Prostate gland (tissue), 2 donors: ENCODE measurements at regions of chr5 and their contacts with region 1.

Region 1: DNA sequence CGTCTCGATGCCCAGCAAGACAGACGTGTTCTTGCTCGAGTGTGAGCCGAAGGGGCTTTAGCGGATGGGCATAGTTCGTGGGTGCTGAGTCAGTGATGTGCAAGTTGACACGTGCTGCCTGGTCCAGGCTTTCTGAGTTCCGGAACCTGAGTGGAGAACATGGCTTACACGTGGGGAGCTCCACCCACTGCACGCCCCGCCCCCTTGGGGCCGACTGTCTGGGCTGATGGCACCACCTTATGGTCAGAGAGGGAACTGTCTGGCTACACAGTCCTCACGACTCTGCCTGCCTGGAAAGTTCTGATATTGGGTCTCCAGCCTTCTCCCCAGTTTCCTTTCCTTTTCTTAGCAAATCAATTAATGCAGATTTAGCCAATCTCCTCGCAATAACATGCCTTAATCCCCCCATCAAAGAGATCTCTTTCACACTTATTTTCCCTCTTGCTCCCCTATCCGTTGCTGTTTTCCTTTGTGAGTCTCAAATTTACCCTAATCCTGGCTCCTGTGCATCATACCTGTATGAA is 3.8 kb upstream of the STC2 start:
- DNase-seq: peak; percentile 70
- H3K4me3 ChIP-seq: no peak overlapping the region
- H3K27ac ChIP-seq: no peak overlapping the region
- H3K4me1 ChIP-seq: peaks cover 15% of the 10 kb centered on the region
- H3K27me3 ChIP-seq: peaks cover 8% of the 10 kb centered on the region
- CTCF ChIP-seq: peak; percentile 81 to 95 (median 88)
- POLR2A ChIP-seq: no peak

Region 2: DNA sequence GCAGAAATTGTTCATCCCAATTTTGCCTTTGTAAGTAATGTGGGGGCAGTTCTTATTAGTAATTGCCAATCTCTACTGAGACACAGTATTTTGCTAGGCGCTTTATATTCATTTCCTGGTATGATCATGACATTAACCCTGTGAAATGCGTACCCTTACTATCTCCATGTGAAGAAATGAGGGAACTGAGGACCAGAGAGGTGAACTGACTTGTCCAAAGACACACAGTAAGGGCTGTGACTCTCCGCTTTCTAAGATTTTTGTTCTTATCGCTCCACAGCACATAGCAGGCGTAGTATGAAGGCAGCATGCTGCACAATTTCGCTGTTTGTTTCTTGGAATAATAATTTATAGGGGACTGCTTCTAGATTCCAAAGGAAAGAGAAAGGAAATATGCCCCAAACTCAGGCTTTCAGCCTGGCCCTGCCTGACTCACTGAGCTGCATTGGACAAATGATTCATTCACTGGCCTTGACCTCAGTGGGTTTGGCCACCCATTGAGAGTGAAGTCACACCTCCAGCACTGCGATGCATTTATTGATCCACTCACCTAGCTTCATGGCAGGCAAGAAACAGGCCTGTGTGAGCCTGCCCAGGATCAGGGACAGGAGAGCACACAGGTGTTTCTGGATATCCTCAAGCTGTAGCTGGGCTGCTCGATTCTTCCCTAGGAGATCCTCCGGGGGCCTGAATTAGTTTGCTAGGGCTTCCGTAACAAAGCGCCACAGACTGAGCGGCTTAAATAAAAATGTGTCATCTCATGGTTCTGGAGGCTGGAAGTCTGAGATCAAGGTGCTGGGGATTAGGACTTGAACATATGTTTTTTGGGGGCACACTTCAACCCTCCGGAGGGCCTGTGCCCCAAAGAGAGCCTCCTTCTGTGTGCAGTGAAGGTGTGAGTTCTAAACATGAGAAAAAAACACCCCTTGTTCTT is 553.9 kb before region 1 on chr5:
- intact Hi-C with region 1: no loop called
- DNase-seq: no peak
- H3K4me3 ChIP-seq: no peak overlapping the region
- H3K27ac ChIP-seq: peak overlapping the region; percentile 98 to 100
- H3K4me1 ChIP-seq: peaks cover 15% of the 10 kb centered on the region
- H3K27me3 ChIP-seq: no peaks in the 10 kb centered on the region
- CTCF ChIP-seq: no peak
- POLR2A ChIP-seq: no peak

Region 3: DNA sequence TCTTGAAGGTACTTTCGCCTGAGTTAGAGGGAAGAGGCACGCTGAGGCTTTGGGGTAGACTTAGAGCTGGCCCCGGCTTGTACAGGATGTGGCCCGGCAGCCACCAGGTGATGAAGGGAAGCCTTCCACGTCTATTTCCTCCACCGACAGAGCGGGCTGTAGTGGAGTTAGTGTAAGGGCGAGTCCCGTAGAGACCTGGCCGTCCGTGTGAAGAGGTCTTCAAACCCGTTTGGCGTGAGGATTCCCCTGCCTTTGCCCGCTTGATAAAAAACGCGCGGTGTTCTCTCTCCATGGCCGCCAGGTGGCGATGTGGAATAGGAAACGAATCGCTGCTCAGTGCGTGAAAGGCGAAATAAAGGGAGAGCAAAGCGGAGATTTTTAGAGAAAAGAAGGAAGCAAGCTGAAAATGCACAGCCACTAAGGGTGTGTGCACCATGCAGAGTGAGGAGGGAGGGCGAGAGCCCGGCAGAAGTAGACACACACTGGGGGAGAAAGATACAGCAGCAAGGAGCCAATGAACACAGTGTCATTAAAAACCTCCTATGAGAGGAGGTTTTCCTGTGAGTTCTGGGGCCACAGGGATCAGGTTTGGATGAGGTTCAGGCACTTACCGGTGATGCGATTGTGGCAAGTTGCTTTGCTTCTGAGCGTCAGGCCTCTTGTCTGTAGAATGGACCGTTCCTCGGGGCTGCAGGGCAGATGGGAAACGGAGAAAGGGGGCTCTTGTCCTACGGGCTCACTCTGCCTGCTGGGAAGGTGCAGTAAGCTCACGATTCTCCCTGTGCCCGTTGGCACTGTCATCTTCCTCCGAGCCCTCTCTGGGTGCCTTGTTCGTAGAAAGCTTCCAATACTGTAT is 38.0 kb before region 1 on chr5:
- intact Hi-C with region 1: loop called (anchors 2 kb)
- DNase-seq: peak; percentile 63
- H3K4me3 ChIP-seq: no peak overlapping the region
- H3K27ac ChIP-seq: no peak overlapping the region
- H3K4me1 ChIP-seq: no peaks in the 10 kb centered on the region
- H3K27me3 ChIP-seq: no peaks in the 10 kb centered on the region
- CTCF ChIP-seq: peak; percentile 64 to 93 (median 91)
- POLR2A ChIP-seq: no peak